Spleen (tissue), 13 donors: ENCODE measurements at regions of chr16 and their contacts with region 1.

Region 1: DNA sequence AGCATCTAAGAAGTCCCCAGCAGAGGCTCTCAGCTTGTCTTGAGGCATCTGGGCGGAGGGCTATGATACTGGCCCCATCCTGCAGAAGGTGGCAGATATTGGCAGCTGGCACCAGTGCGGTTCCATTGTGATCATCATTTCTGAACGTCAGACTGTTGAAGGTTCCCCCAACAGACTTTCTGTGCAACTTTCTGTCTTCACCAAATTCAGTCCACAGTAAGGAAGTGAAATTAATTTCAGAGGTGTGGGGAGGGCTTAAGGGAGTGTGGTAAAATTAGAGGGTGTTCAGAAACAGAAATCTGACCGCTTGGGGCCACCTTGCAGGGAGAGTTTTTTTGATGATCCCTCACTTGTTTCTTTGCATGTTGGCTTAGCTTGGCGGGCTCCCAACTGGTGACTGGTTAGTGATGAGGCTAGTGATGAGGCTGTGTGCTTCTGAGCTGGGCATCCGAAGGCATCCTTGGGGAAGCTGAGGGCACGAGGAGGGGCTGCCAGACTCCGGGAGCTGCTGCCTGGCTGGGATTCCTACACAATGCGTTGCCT is at the start of gene CIITA:
- DNase-seq: peak; percentile 92
- H3K4me3 ChIP-seq: peak within 1 kb of the TSS; percentile 33 to 94 (median 88)
- H3K27ac ChIP-seq: peak within 1 kb of the TSS; percentile 55 to 91 (median 82)
- H3K4me1 ChIP-seq: peaks cover 21 to 93% (median 77%) of the 10 kb centered on the region in 6 donors
- H3K27me3 ChIP-seq: peaks cover 0 to 21% (median 0%) of the 10 kb centered on the region in 7 donors
- CTCF ChIP-seq: peak in 2 of 11 experiments; percentile 3 to 11
- POLR2A ChIP-seq: peak in 2 of 3 donors; percentile 46 to 60
- total RNA-seq, gene CIITA: 88.0 to 179 (median 143) TPM

Region 2: GRCh38 chr16:10743610-10744393 is 133.1 kb before region 1 on chr16 and contains the start of gene NUBP1:
- intact Hi-C with region 1: loop called (anchors 5 kb)
- DNase-seq: peak; percentile 99
- H3K4me3 ChIP-seq: peak within 1 kb of the TSS; percentile 40 to 74 (median 53)
- H3K27ac ChIP-seq: peak within 1 kb of the TSS; percentile 93 to 98 (median 97)
- H3K4me1 ChIP-seq: peaks cover 17 to 72% (median 34%) of the 10 kb centered on the region in 6 donors
- H3K27me3 ChIP-seq: no peaks in the 10 kb centered on the region
- CTCF ChIP-seq: peak in 3 of 11 experiments; percentile 5 to 40 (median 16)
- POLR2A ChIP-seq: peak; percentile 21 to 49 (median 45)
- total RNA-seq, gene NUBP1: 22.8 to 47.5 (median 32.8) TPM